Naive thymus-derived CD4-positive, alpha-beta T cell (primary cell): ENCODE measurements at regions of chr19 and their contacts with region 1.

Region 1: DNA sequence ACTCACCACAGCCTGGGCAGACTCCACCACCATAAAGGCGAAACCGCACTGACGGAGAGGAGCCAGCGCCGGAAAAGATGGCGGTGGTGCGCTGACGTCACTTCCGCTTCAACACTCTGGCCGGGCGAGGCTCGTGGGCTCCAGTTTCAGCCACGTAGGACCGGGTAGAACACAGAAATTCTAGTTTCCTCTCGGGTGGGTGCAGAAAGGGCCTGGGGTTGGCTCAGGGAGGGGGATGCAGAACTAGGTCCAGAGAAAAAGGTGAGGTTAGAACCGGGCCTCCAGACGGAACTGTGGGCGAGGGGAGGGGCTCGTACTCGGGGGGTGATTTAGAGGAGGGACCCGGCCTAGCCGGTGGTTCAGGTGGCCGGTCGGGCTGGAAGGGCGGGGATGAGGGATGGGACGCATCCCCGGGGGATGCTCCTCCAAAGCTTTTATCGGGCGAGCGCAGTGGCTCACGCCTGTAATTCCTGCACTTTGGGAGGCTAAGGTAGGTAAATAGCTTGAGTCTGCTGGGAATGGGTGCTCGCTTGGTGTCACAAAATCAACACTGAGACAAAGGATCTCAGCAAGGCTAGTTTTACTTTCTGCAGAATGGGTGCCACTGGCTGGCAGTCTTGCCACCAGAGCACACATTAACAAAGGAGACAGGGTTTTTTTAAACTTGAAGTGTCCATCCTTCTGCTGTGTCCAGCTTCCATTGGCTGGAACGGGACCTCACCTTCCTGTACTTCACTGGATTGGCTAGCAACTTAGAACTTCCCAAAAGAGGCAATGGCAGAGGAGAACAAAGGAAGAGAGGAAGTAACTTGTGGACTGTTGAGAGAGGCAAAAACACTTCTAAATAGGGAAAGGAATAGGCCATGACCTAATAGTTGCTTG is at the start of gene ZNF561:
- DNase-seq: peak; percentile 73 to 93 (median 89)
- ATAC-seq: peak; percentile 94
- H3K4me3 ChIP-seq: peak within 1 kb of the TSS; percentile 96
- H3K4me3 Mint-ChIP-seq: peak within 1 kb of the TSS; percentile 96 to 100 (median 99)
- H3K27ac ChIP-seq: peak within 1 kb of the TSS; percentile 89
- H3K27ac Mint-ChIP-seq: peak within 1 kb of the TSS; percentile 99 to 100 (median 100)
- H3K4me1 ChIP-seq: peaks cover 12 to 13% of the 10 kb centered on the region in 2 donors
- H3K4me1 Mint-ChIP-seq: peaks cover 13 to 34% (median 25%) of the 10 kb centered on the region in 7 donors
- H3K27me3 ChIP-seq: no peaks in the 10 kb centered on the region
- H3K27me3 Mint-ChIP-seq: peaks cover 0 to 4% (median 0%) of the 10 kb centered on the region in 5 donors
- total RNA-seq, gene ZNF561: 35.9 to 72.5 (median 42.3) TPM

Region 2: DNA sequence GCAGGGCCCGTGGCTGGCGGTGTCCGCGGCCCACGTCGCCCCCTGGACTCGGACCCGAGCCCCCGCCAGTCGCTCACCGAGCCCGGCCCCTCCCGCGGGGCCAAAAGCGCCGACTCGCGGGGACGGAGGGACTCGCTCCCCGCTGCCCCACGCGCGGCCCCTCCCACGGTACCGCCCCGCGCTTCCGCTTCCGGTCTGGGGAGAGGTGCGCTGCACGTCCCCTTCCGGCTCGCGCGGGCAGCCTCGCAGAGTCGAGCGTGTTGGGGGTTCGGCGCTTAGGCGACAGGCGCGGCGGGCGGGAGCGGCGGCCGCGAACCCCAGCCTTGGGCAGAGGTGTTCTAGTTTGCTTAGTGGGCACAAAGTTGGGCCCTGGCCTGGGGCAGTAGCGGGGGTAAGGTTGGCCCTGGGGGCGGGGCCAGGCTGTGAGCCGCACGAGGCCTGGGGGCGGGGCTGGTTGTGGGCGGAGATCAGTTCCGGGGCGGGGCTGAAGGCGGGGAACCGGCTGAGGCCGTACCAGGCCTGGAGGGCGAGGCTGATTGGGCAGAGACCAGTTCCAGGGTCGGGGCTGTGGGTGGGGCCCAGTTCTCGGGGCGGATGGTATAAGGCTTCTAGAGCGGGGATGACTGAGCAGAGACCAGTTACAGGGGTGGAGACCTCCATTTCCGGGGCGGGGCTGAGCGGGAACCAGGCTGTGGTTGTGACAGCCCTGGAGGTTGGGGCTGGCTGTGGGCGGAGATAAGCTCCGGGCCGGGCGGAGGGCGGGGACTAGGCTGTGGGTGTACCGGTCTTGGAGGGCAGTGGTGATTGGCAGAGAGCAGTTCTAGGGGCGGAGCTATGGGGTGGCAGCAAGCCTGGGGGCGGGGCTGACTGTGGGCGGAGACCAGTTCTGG is 789.0 kb before region 1 on chr19 and contains the starts of genes MBD3L1 and ZNF558:
- CTCF ChIA-PET with region 1: no interaction called
- POLR2A ChIA-PET with region 1: no interaction called
- intact Hi-C with region 1: loop called in 1 of 2 experiments (anchors 2 kb)
- DNase-seq: peak; percentile 99 to 100 (median 99)
- ATAC-seq: peak; percentile 92
- H3K4me3 ChIP-seq: peak within 1 kb of the TSS; percentile 79
- H3K4me3 Mint-ChIP-seq: peak within 1 kb of the TSS; percentile 86 to 98 (median 90)
- H3K27ac ChIP-seq: peak within 1 kb of the TSS; percentile 93
- H3K27ac Mint-ChIP-seq: peak within 1 kb of the TSS; percentile 93 to 99 (median 96)
- H3K4me1 ChIP-seq: peaks cover 9 to 11% of the 10 kb centered on the region in 2 donors
- H3K4me1 Mint-ChIP-seq: peaks cover 6 to 38% (median 24%) of the 10 kb centered on the region in 7 donors
- H3K27me3 ChIP-seq: no peaks in the 10 kb centered on the region
- H3K27me3 Mint-ChIP-seq: peaks cover 0 to 16% (median 0%) of the 10 kb centered on the region in 5 donors
- total RNA-seq, gene MBD3L1: not detected
- total RNA-seq, gene ZNF558: 18.7 to 44.9 (median 26.3) TPM

Region 3: DNA sequence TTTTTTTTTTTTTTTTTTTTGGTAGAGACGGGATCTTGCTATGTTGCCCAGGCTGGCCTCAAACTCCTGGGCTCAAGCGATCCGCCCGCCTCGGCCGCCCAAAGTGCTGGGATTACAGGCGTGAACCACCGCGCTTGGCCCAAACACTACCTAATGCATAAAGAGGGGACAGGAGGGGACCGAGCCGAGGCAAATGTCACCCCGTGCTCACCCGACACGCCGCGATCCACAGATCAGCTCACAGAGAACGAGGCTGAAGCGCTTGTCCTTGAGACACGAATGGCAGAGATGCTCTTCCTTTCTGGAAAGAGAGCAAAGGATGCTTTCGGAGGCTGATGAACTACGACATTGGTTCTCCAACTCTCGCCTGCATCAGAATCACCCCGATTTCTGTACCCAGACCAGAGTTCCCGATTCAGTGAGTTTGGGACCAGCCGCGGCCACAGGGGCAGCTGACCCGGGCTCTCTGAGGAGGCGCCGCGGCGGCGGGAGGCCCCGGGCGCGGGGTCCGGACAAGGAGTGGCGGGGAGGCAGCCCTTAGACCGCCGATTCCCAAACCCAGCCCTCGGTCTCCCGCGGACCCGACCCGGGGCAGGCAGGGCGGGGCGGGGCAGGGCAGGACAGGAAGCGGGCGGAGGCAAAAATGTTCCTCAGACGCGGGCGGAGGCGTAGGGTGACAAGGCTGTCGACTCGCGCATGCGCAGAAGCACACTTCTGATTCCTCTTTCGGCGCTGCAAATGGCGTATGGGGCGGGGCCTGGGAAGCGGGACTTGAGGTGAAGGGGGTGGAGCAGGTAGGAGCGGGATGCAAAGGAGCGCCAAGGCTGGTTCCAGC is 312.0 kb before region 1 on chr19 and contains the start of gene ZNF699:
- CTCF ChIA-PET with region 1: interaction called, 3 read pairs
- POLR2A ChIA-PET with region 1: no interaction called
- intact Hi-C with region 1: loop called in 1 of 2 experiments (anchors 1 kb)
- DNase-seq: peak; percentile 94 to 100 (median 97)
- ATAC-seq: peak; percentile 94
- H3K4me3 ChIP-seq: peak within 1 kb of the TSS; percentile 95
- H3K4me3 Mint-ChIP-seq: peak within 1 kb of the TSS; percentile 89 to 98 (median 96)
- H3K27ac ChIP-seq: peak within 1 kb of the TSS; percentile 98
- H3K27ac Mint-ChIP-seq: peak within 1 kb of the TSS; percentile 89 to 99 (median 97)
- H3K4me1 ChIP-seq: peaks cover 6 to 15% of the 10 kb centered on the region in 2 donors
- H3K4me1 Mint-ChIP-seq: peaks cover 4 to 37% (median 24%) of the 10 kb centered on the region in 7 donors
- H3K27me3 ChIP-seq: no peaks in the 10 kb centered on the region
- H3K27me3 Mint-ChIP-seq: peaks cover 0 to 2% (median 0%) of the 10 kb centered on the region in 5 donors
- total RNA-seq, gene ZNF699: 9.1 to 19.1 (median 15.5) TPM

Region 4: GRCh38 chr19:9584073-9584833 is 37.1 kb before region 1 on chr19 and contains the start of gene ZNF121:
- CTCF ChIA-PET with region 1: interaction called, 3 read pairs
- POLR2A ChIA-PET with region 1: interaction called, 3 read pairs
- intact Hi-C with region 1: loop called (anchors 1 to 2 kb)
- DNase-seq: peak; percentile 61 to 82 (median 74)
- ATAC-seq: peak; percentile 87
- H3K4me3 ChIP-seq: peak within 1 kb of the TSS; percentile 98
- H3K4me3 Mint-ChIP-seq: peak within 1 kb of the TSS; percentile 91 to 99 (median 96)
- H3K27ac ChIP-seq: peak within 1 kb of the TSS; percentile 97
- H3K27ac Mint-ChIP-seq: peak within 1 kb of the TSS; percentile 94 to 99 (median 95)
- H3K4me1 ChIP-seq: peaks cover 7 to 15% of the 10 kb centered on the region in 2 donors
- H3K4me1 Mint-ChIP-seq: peaks cover 21 to 54% (median 34%) of the 10 kb centered on the region in 7 donors
- H3K27me3 ChIP-seq: no peaks in the 10 kb centered on the region
- H3K27me3 Mint-ChIP-seq: peaks cover 0 to 5% (median 4%) of the 10 kb centered on the region in 5 donors
- total RNA-seq, gene ZNF121: 28.3 to 49.4 (median 47.0) TPM

Region 5: GRCh38 chr19:9709305-9709704 is 87.9 kb after region 1 on chr19:
- CTCF ChIA-PET with region 1: no interaction called
- POLR2A ChIA-PET with region 1: no interaction called
- intact Hi-C with region 1: no loop called
- DNase-seq: no peak
- ATAC-seq: no peak
- H3K4me3 ChIP-seq: no peak overlapping the region
- H3K4me3 Mint-ChIP-seq: no peak overlapping the region
- H3K27ac ChIP-seq: no peak overlapping the region
- H3K27ac Mint-ChIP-seq: peak overlapping the region in 1 of 9 donors; percentile 41
- H3K4me1 ChIP-seq: no peaks in the 10 kb centered on the region
- H3K4me1 Mint-ChIP-seq: peaks cover 0 to 3% (median 0%) of the 10 kb centered on the region in 7 donors
- H3K27me3 ChIP-seq: no peaks in the 10 kb centered on the region
- H3K27me3 Mint-ChIP-seq: peaks cover 0 to 19% (median 7%) of the 10 kb centered on the region in 5 donors

Region 6: GRCh38 chr19:9768175-9769112 is 147.0 kb after region 1 on chr19 and contains the start of gene ZNF846:
- CTCF ChIA-PET with region 1: interaction called, 3 read pairs
- POLR2A ChIA-PET with region 1: interaction called, 20 read pairs
- intact Hi-C with region 1: loop called (anchors 1 kb)
- DNase-seq: peak; percentile 83 to 94 (median 91)
- ATAC-seq: peak; percentile 98
- H3K4me3 ChIP-seq: peak within 1 kb of the TSS; percentile 95
- H3K4me3 Mint-ChIP-seq: peak within 1 kb of the TSS; percentile 81 to 99 (median 95)
- H3K27ac ChIP-seq: peak within 1 kb of the TSS; percentile 93
- H3K27ac Mint-ChIP-seq: peak within 1 kb of the TSS; percentile 92 to 100 (median 97)
- H3K4me1 ChIP-seq: peaks cover 8 to 10% of the 10 kb centered on the region in 2 donors
- H3K4me1 Mint-ChIP-seq: peaks cover 0 to 21% (median 9%) of the 10 kb centered on the region in 7 donors
- H3K27me3 ChIP-seq: no peaks in the 10 kb centered on the region
- H3K27me3 Mint-ChIP-seq: no peaks in the 10 kb centered on the region
- total RNA-seq, gene ZNF846: 5.1 to 24.8 (median 13.0) TPM

Region 7: GRCh38 chr19:9827289-9828238 is 206.2 kb after region 1 on chr19 and contains the start of gene UBL5:
- CTCF ChIA-PET with region 1: interaction called, 8 read pairs
- POLR2A ChIA-PET with region 1: interaction called, 4 read pairs
- intact Hi-C with region 1: loop called in 1 of 2 experiments (anchors 1 kb)
- DNase-seq: peak; percentile 72 to 91 (median 89)
- ATAC-seq: peak; percentile 98
- H3K4me3 ChIP-seq: peak within 1 kb of the TSS; percentile 97
- H3K4me3 Mint-ChIP-seq: peak within 1 kb of the TSS; percentile 90 to 100 (median 99)
- H3K27ac ChIP-seq: peak within 1 kb of the TSS; percentile 87
- H3K27ac Mint-ChIP-seq: peak within 1 kb of the TSS; percentile 83 to 99 (median 98)
- H3K4me1 ChIP-seq: peaks cover 14 to 16% of the 10 kb centered on the region in 2 donors
- H3K4me1 Mint-ChIP-seq: peaks cover 15 to 45% (median 27%) of the 10 kb centered on the region in 7 donors
- H3K27me3 ChIP-seq: no peaks in the 10 kb centered on the region
- H3K27me3 Mint-ChIP-seq: no peaks in the 10 kb centered on the region
- total RNA-seq, gene UBL5: 182 to 375 (median 198) TPM

Region 8: DNA sequence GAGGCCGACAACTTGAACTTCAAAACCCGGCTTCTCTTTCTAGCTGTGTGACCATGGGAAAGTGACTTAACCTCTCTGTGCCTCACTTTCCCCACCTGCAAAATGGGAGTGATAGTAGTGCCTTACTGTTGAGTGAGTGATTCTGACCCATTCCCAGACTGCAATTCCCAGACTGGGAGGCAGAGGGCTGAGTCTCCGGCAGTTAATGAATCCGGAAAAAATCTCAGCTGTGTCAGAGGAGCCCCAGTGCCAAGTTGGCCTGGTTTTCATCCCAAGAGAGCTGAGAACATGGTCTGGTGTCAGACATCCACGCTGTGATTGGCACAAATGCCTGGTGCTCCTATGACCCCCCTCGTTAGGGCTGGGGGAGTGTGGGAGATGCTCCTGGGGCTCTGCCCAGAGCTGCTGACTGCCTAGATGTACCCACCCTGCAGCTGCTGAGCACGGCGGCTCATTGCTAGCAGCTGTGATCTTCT is 263.7 kb after region 1 on chr19:
- CTCF ChIA-PET with region 1: no interaction called
- POLR2A ChIA-PET with region 1: no interaction called
- intact Hi-C with region 1: no loop called
- DNase-seq: no peak
- ATAC-seq: no peak
- H3K4me3 ChIP-seq: no peak overlapping the region
- H3K4me3 Mint-ChIP-seq: no peak overlapping the region
- H3K27ac ChIP-seq: no peak overlapping the region
- H3K27ac Mint-ChIP-seq: no peak overlapping the region
- H3K4me1 ChIP-seq: no peaks in the 10 kb centered on the region
- H3K4me1 Mint-ChIP-seq: peaks cover 0 to 8% (median 4%) of the 10 kb centered on the region in 7 donors
- H3K27me3 ChIP-seq: no peaks in the 10 kb centered on the region
- H3K27me3 Mint-ChIP-seq: peaks cover 0 to 7% (median 0%) of the 10 kb centered on the region in 5 donors

Region 9: DNA sequence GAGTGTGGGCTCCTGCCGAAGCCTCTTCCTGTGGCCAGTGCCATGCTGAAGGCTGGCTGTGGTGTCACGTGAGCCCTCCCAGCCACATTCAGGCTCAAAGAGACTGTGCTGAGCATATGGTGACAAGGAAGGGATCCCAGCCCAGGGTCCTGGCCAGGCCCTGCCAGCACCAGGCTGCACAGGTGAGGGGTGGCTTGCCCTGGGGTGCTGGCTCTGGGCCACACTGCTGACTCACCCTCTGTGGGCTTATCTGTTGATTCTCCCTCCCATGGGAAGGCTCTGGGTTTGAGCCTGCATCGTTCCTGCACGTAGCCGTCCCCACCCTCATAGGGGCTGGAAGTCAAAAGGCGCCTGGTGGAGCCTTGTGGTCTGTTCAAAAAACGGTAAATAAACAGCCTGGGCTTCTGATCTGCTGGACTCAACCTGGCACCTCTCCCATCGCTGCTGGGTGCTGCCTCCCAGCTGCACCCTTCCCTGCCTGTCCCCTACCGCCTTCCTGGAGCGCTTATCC is 1127.6 kb after region 1 on chr19:
- CTCF ChIA-PET with region 1: no interaction called
- POLR2A ChIA-PET with region 1: no interaction called
- intact Hi-C with region 1: no loop called
- DNase-seq: no peak
- ATAC-seq: peak; percentile 14
- H3K4me3 ChIP-seq: no peak overlapping the region
- H3K4me3 Mint-ChIP-seq: peak overlapping the region in 2 of 10 donors; percentile 14 to 25
- H3K27ac ChIP-seq: peak overlapping the region; percentile 39
- H3K27ac Mint-ChIP-seq: peak overlapping the region in 8 of 9 donors; percentile 48 to 99 (median 82)
- H3K4me1 ChIP-seq: peaks cover 14 to 55% of the 10 kb centered on the region in 2 donors
- H3K4me1 Mint-ChIP-seq: peaks cover 53 to 88% (median 69%) of the 10 kb centered on the region in 7 donors
- H3K27me3 ChIP-seq: no peaks in the 10 kb centered on the region
- H3K27me3 Mint-ChIP-seq: no peaks in the 10 kb centered on the region